ENCODE measurements at regions of chr20 and their contacts with region 1.

Region 1: DNA sequence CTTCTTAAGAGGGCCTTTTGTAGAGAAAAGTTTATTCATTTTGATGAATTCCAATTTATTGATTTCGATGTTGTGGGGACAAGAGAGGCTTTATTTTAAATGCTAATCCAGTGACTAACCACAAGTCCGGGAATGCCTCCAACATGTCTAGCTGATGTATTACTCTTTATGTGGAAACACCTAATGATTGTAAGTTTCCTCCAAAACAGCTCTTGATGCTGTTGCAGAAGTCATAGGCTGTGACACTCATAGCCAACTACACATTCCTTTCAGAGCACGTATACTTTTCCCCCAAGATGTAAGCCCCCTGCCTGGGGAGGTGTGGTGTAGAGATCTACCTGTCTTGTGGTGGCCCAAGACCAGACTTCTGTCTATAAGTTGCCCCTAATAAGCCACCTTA is 61.3 kb upstream of the RNF24 start:
- DNase-seq: no peak
- ATAC-seq: no peak
- H3K4me3 ChIP-seq: no peak overlapping the region
- H3K27ac ChIP-seq: no peak overlapping the region
- H3K4me1 ChIP-seq: peaks cover 0 to 19% (median 0%) of the 10 kb centered on the region in 9 donors
- H3K27me3 ChIP-seq: no peaks in the 10 kb centered on the region
- CTCF ChIP-seq: no peak

Region 2: GRCh38 chr20:3864518-3864917 is 212.2 kb before region 1 on chr20:
- intact Hi-C with region 1: loop called in 1 of 10 experiments (anchors 10 kb)
- DNase-seq: no peak
- ATAC-seq: peak in 2 of 8 donors; percentile 17 to 21
- H3K4me3 ChIP-seq: no peak overlapping the region
- H3K27ac ChIP-seq: no peak overlapping the region
- H3K4me1 ChIP-seq: peaks cover 0 to 3% (median 0%) of the 10 kb centered on the region in 9 donors
- H3K27me3 ChIP-seq: no peaks in the 10 kb centered on the region
- CTCF ChIP-seq: no peak

Region 3: DNA sequence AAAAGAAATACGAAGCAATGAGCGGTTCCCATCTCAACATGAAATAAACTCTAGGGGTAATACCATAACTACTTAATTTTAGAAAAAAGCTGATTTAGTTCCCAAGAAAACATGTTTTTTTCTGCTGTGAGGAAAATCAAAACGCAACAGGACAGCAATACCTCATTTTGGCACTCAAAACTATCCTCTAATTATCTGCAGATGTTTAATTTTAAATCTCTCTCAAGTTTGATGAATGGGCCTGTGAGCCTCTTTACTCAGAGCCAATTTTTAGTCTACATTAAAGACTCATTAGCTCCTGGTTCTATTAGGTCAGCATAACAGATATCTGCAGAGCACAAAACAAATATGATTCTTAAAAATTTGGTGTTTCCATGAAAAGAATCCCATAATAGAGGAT is 89.4 kb before region 1 on chr20:
- intact Hi-C with region 1: no loop called
- DNase-seq: no peak
- ATAC-seq: peak in 2 of 8 donors; percentile 11 to 14
- H3K4me3 ChIP-seq: no peak overlapping the region
- H3K27ac ChIP-seq: no peak overlapping the region
- H3K4me1 ChIP-seq: peaks cover 0 to 23% (median 0%) of the 10 kb centered on the region in 9 donors
- H3K27me3 ChIP-seq: no peaks in the 10 kb centered on the region
- CTCF ChIP-seq: no peak

Region 4: GRCh38 chr20:4152006-4152695 is 75.5 kb after region 1 on chr20:
- intact Hi-C with region 1: no loop called
- DNase-seq: no peak
- ATAC-seq: no peak
- H3K4me3 ChIP-seq: no peak overlapping the region
- H3K27ac ChIP-seq: no peak overlapping the region
- H3K4me1 ChIP-seq: peaks cover 0 to 56% (median 19%) of the 10 kb centered on the region in 9 donors
- H3K27me3 ChIP-seq: peaks cover 0 to 19% (median 0%) of the 10 kb centered on the region in 7 donors
- CTCF ChIP-seq: no peak

Region 5: GRCh38 chr20:4195499-4195898 is 118.8 kb after region 1 on chr20:
- intact Hi-C with region 1: no loop called
- DNase-seq: no peak
- ATAC-seq: peak in 2 of 8 donors; percentile 47 to 54
- H3K4me3 ChIP-seq: no peak overlapping the region
- H3K27ac ChIP-seq: no peak overlapping the region
- H3K4me1 ChIP-seq: no peaks in the 10 kb centered on the region
- H3K27me3 ChIP-seq: no peaks in the 10 kb centered on the region
- CTCF ChIP-seq: peak in 7 of 9 donors; percentile 37 to 58 (median 42)

Region 6: GRCh38 chr20:4444404-4444803 is 367.7 kb after region 1 on chr20:
- intact Hi-C with region 1: no loop called
- DNase-seq: no peak
- ATAC-seq: no peak
- H3K4me3 ChIP-seq: no peak overlapping the region
- H3K27ac ChIP-seq: no peak overlapping the region
- H3K4me1 ChIP-seq: no peaks in the 10 kb centered on the region
- H3K27me3 ChIP-seq: peaks cover 0 to 3% (median 0%) of the 10 kb centered on the region in 7 donors
- CTCF ChIP-seq: no peak

Measured in heart right ventricle (tissue), 16 donors.